GM12878 (cell line): ENCODE measurements at regions of chr21 and their contacts with region 1.

Region 1: GRCh38 chr21:14773777-14774345 is 227.7 kb upstream of the SAMSN1 start:
- DNase-seq: no peak
- ATAC-seq: peak; percentile 78
- H3K4me3 ChIP-seq: no peak overlapping the region
- H3K27ac ChIP-seq: no peak overlapping the region
- H3K4me1 ChIP-seq: no peaks in the 10 kb centered on the region
- H3K27me3 ChIP-seq: no peaks in the 10 kb centered on the region
- CTCF ChIP-seq: peak; percentile 69 to 73 (median 72); a peak in 5 of 6 replicates
- EP300 ChIP-seq: no peak
- POLR2A ChIP-seq: no peak
- RAD21 ChIP-seq: peak; percentile 87

Region 2: DNA sequence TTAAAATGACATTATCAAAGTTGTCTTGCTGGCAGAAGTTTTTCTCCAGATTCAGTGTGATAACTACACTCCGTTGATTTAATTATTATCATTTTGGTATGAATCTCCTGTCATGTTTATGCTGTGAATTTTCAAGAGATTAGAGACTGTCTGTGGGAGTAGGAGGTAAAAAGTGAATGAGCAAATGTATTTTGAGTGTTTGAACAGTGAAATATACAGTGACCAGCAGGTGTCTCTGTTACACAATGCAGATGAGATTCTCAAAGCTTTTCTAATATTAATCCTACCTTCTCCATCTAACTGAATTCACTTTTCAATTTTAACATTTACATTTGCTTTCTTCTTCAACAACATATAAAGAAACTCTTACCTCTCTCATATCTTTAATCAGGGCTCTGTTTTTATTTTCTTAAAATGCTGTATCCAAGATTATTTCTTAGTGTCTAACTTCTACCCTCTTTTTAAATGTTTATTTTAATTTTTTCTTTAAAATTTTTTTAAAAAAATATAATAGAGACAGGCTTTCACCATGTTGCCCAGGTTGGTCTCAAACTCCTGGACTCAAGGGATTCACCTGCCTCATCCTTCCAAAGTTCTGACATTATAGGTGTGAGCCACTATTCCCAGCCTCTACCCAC is 370.1 kb before region 1 on chr21:
- CTCF ChIA-PET with region 1: interaction called, 4 read pairs
- POLR2A ChIA-PET with region 1: no interaction called
- RAD21 ChIA-PET with region 1: interaction called, 3 read pairs
- SMC1A ChIA-PET with region 1: interaction called, 3 read pairs
- in situ Hi-C with region 1: no loop called
- intact Hi-C with region 1: loop called (anchors 1 kb)
- DNase-seq: peak; percentile 9
- ATAC-seq: peak; percentile 78
- H3K4me3 ChIP-seq: no peak overlapping the region
- H3K27ac ChIP-seq: no peak overlapping the region
- H3K4me1 ChIP-seq: no peaks in the 10 kb centered on the region
- H3K27me3 ChIP-seq: no peaks in the 10 kb centered on the region
- CTCF ChIP-seq: peak; percentile 42 to 72 (median 60); a peak in 5 of 6 replicates
- EP300 ChIP-seq: no peak
- POLR2A ChIP-seq: no peak
- RAD21 ChIP-seq: peak; percentile 83

Region 3: GRCh38 chr21:14762734-14763694 is 10.8 kb before region 1 on chr21:
- CTCF ChIA-PET with region 1: interaction called, 12 read pairs
- POLR2A ChIA-PET with region 1: no interaction called
- RAD21 ChIA-PET with region 1: interaction called, 5 read pairs
- SMC1A ChIA-PET with region 1: interaction called, 14 read pairs
- in situ Hi-C with region 1: no loop called
- intact Hi-C with region 1: no loop called
- DNase-seq: peak; percentile 82
- ATAC-seq: peak; percentile 97
- H3K4me3 ChIP-seq: peak overlapping the region; percentile 59
- H3K27ac ChIP-seq: peak overlapping the region; percentile 87
- H3K4me1 ChIP-seq: peaks cover 10% of the 10 kb centered on the region
- H3K27me3 ChIP-seq: no peaks in the 10 kb centered on the region
- CTCF ChIP-seq: no peak
- EP300 ChIP-seq: peak; percentile 89 to 98
- POLR2A ChIP-seq: no peak
- RAD21 ChIP-seq: 0 out of 2 replicates have a peak, but pooled peaks have one; percentile 24